PC-3 (cell line): ENCODE measurements at regions of chr4 and their contacts with region 1.

Region 1: GRCh38 chr4:56435306-56435926 is at the start of gene PPAT:
- DNase-seq: peak; percentile 99
- ATAC-seq: peak; percentile 78
- H3K4me3 ChIP-seq: peak within 1 kb of the TSS; percentile 79
- H3K27ac ChIP-seq: peak within 1 kb of the TSS; percentile 80
- H3K4me1 ChIP-seq: peaks cover 36% of the 10 kb centered on the region
- H3K27me3 ChIP-seq: no peaks in the 10 kb centered on the region
- CTCF ChIP-seq: no peak
- total RNA-seq, gene PPAT: 31.7 and 35.9 TPM in 2 replicates

Region 2: GRCh38 chr4:55175779-55176231 is 1259.6 kb before region 1 on chr4:
- CTCF ChIA-PET with region 1: no interaction called
- POLR2A ChIA-PET with region 1: interaction called, 15 read pairs
- intact Hi-C with region 1: no loop called
- DNase-seq: peak; percentile 94
- ATAC-seq: peak; percentile 73
- H3K4me3 ChIP-seq: peak overlapping the region; percentile 57
- H3K27ac ChIP-seq: peak overlapping the region; percentile 87
- H3K4me1 ChIP-seq: peaks cover 54% of the 10 kb centered on the region
- H3K27me3 ChIP-seq: no peaks in the 10 kb centered on the region
- CTCF ChIP-seq: no peak

Region 3: GRCh38 chr4:56387023-56388001 is 48.1 kb before region 1 on chr4 and contains the start of gene AASDH:
- CTCF ChIA-PET with region 1: no interaction called
- POLR2A ChIA-PET with region 1: interaction called, 22 read pairs
- intact Hi-C with region 1: loop called (anchors 2 kb)
- DNase-seq: peak; percentile 98
- ATAC-seq: peak; percentile 90
- H3K4me3 ChIP-seq: peak within 1 kb of the TSS; percentile 88
- H3K27ac ChIP-seq: peak within 1 kb of the TSS; percentile 86
- H3K4me1 ChIP-seq: peaks cover 21% of the 10 kb centered on the region
- H3K27me3 ChIP-seq: no peaks in the 10 kb centered on the region
- CTCF ChIP-seq: no peak
- total RNA-seq, gene AASDH: 7.5 and 8.8 TPM in 2 replicates

Region 4: DNA sequence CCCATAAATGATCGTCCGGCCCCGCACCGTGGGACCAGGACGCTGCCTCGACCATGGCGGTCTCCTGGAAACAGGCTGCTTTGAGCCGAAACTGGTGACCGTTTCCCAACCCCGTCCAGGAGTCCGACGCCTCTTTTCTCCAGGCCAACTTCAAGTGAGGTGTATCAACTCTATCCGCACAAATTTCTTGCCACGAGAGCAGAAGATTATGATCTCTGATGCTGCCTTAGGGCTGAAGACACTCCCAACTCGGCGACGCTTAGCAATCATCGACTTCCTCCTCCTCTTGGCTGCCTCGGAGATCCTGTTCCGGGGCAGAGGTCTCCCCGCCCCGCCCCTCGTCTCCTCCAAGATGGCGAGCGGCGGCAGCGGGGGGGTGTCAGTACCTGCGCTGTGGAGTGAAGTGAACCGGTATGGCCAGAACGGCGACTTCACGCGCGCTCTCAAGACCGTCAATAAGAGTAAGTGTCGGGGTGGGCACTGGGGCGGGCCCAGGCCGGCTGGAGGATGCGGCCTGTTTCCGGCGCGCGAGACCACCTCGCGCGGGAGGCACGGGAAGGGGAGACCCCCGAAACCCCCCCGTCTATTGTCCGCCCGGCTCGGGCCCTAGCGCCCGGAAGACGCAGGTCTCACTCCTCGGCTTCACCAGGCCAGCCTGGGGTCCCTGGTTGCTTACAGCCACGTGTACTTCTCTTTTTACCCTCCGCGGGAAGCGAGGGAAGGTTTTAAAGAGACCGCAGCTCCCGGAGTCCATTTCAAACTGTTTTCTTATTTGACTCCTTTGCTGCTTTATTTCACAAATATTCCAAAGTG is 32.1 kb after region 1 on chr4 and contains the start of gene SRP72:
- CTCF ChIA-PET with region 1: no interaction called
- POLR2A ChIA-PET with region 1: interaction called, 6 read pairs
- intact Hi-C with region 1: loop called (anchors 2 kb)
- DNase-seq: peak; percentile 95
- ATAC-seq: peak; percentile 89
- H3K4me3 ChIP-seq: peak within 1 kb of the TSS; percentile 86
- H3K27ac ChIP-seq: peak within 1 kb of the TSS; percentile 75
- H3K4me1 ChIP-seq: peaks cover 26% of the 10 kb centered on the region
- H3K27me3 ChIP-seq: no peaks in the 10 kb centered on the region
- CTCF ChIP-seq: no peak
- total RNA-seq, gene SRP72: 102 and 118 TPM in 2 replicates

Region 5: GRCh38 chr4:56907489-56908205 is 472.2 kb after region 1 on chr4 and contains the start of gene REST:
- CTCF ChIA-PET with region 1: no interaction called
- POLR2A ChIA-PET with region 1: no interaction called
- intact Hi-C with region 1: loop called (anchors 10 kb)
- DNase-seq: peak; percentile 79
- ATAC-seq: peak; percentile 68
- H3K4me3 ChIP-seq: peak within 1 kb of the TSS; percentile 89
- H3K27ac ChIP-seq: no peak within 1 kb of the TSS
- H3K4me1 ChIP-seq: peaks cover 20% of the 10 kb centered on the region
- H3K27me3 ChIP-seq: no peaks in the 10 kb centered on the region
- CTCF ChIP-seq: no peak
- total RNA-seq, gene REST: 21.7 and 22.4 TPM in 2 replicates